Upper lobe of right lung (tissue), 1 donor: ENCODE measurements at regions of chr19 and their contacts with region 1.

Region 1: DNA sequence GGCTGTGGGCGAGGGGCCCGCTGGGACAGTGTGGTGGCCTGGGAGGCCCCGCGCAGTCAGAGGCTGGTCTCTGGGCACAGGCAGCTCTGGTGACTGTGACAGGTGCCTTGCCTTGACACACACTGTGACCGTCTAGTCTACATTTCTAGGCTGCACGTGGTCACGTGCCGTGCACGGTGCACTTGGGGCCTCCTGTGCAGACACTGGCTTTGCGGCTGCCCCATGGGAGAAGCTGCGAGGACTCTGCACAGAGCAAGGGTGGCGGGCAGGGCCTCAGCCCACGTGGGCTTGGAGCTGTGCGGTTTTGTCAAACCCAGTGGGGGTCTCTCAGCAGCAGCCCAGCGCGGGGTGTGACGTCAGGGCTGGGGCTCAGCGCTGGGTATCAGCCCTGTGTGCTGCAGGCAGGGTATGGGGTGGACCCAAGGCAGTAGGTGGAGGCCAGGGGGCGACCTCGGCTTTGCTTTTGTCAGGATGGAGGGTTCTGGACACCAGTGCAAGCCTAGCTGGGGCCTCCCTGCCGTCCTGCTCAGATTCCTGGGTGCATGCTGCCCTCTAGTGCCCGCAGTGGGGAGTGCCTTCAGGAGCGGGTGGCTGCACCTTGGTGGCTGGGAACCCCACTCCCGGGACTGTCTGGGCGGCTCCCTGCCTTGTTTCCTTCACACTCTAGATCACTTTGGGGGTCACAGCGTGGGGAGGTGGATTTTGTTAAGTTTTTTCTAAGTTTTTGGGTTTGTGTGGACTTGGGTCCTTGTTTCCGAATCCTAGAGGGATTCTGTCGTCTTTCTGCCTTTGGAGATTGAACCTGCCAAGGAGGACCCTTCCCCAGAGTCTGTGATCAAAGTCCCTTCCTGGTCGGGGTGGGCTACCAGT is 62.6 kb downstream of the KDM4B start:
- DNase-seq: peak; percentile 88
- ATAC-seq: peak; percentile 91
- H3K4me3 ChIP-seq: no peak overlapping the region
- H3K27ac ChIP-seq: no peak overlapping the region
- H3K4me1 ChIP-seq: peaks cover 3% of the 10 kb centered on the region
- H3K27me3 ChIP-seq: no peaks in the 10 kb centered on the region
- CTCF ChIP-seq: peak; percentile 94

Region 2: DNA sequence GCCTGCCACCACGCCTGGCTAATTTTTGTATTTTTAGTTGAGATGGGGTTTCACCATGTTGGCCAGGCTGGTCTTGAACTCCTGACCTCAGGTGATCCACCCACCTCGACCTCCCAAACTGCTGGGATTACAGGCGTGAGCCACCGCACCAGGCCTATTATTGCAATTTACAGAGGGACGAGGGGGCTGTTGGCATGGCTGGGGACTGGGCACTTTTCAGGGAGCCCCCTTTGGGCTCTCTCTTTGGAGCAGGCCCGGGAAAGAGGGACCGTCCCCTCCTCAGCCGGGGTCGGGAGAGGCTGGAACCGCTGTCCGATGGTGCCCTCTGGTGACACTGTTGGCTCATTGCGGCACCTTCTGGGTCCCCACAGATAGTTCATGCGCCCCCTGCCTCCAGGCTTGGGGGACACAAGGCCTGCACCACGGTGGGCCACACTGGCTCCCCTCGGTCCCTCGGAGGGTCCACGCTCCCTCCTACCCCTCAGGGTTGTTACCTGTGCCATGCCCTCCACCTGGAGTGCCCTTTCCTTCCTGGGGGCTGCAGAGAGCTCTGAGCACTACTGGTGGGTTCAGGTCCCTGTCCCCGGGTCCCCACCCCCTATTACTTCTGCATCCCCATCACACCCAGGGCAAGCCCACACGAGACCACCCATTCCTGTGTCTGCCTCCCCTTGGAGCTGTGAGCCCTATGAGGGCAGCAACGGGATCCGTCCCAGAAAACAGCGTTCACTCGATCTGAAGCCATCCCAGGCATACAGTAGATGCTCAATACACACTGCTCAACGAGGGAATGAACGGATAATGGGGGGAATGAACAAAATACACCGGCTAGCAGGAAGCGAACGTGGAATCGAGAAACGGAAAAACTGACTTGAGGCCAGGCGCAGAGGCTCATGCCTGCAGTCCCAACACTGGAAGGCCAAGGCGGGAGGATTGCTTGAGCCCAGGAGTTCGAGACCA is 227.4 kb before region 1 on chr19:
- intact Hi-C with region 1: loop called (anchors 10 kb)
- DNase-seq: peak; percentile 80
- ATAC-seq: peak; percentile 72
- H3K4me3 ChIP-seq: no peak overlapping the region
- H3K27ac ChIP-seq: no peak overlapping the region
- H3K4me1 ChIP-seq: no peaks in the 10 kb centered on the region
- H3K27me3 ChIP-seq: no peaks in the 10 kb centered on the region
- CTCF ChIP-seq: peak; percentile 78

Region 3: GRCh38 chr19:4870025-4870700 is 161.3 kb before region 1 on chr19:
- intact Hi-C with region 1: loop called (anchors 5 kb)
- DNase-seq: peak; percentile 73
- ATAC-seq: peak; percentile 64
- H3K4me3 ChIP-seq: no peak overlapping the region
- H3K27ac ChIP-seq: no peak overlapping the region
- H3K4me1 ChIP-seq: peaks cover 9% of the 10 kb centered on the region
- H3K27me3 ChIP-seq: no peaks in the 10 kb centered on the region
- CTCF ChIP-seq: no peak